IMR-90 (cell line): ENCODE measurements at regions of chr18 and their contacts with region 1.

Region 1: GRCh38 chr18:13392029-13392750 is 173.6 kb downstream of the LDLRAD4 start:
- DNase-seq: no peak
- ATAC-seq: no peak
- H3K4me3 ChIP-seq: no peak overlapping the region
- H3K27ac ChIP-seq: no peak overlapping the region
- H3K4me1 ChIP-seq: 0 out of 2 replicates have a peak, but pooled peaks cover 2% of the 10 kb centered on the region
- H3K27me3 ChIP-seq: peaks cover 8% of the 10 kb centered on the region
- CTCF ChIP-seq: no peak
- POLR2A ChIP-seq: no peak
- RAD21 ChIP-seq: no peak

Region 2: DNA sequence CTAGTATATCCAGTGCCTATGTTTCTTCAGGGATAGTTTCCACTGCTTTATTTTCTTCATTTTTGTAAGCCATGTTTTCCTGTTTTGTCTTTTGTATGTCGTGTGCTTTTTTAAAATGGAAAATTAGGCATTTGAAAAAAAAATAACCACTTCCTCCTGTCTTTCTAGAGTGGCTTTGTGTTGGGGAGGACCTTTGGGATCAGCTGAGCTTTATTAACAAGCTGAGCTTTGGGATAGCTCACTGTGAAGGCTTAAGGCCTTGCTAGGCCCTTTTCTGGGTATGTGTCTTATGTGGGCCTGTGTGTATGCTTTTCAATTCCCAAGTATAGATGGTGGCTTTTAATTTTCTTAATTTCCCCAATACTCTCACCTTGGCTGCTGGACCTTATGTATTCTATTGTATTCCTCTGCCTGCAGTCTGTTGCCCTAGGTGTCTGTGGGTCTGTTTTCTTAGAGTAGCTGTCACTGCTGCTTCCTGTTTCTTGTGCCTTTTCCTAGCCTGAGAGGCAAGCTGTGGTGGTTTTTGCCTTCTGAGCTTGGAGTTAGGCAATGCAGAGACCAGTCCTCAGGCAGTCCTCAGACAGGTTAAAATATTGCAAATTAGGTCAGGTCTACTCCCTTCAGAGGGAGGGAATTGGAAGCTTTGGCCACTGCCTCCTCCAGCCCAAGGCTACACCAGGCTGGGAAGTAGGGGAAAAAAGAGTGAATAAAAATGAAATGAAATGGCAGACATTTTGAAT is 38.9 kb before region 1 on chr18:
- CTCF ChIA-PET with region 1: no interaction called
- POLR2A ChIA-PET with region 1: no interaction called
- dilution Hi-C with region 1: no loop called
- in situ Hi-C with region 1: no loop called
- intact Hi-C with region 1: no loop called
- DNase-seq: no peak
- ATAC-seq: no peak
- H3K4me3 ChIP-seq: no peak overlapping the region
- H3K27ac ChIP-seq: no peak overlapping the region
- H3K4me1 ChIP-seq: no peaks in the 10 kb centered on the region
- H3K27me3 ChIP-seq: no peaks in the 10 kb centered on the region
- CTCF ChIP-seq: no peak
- POLR2A ChIP-seq: no peak
- RAD21 ChIP-seq: no peak

Region 3: GRCh38 chr18:13407484-13407883 is 15.3 kb after region 1 on chr18:
- CTCF ChIA-PET with region 1: no interaction called
- POLR2A ChIA-PET with region 1: interaction called, 22 read pairs
- dilution Hi-C with region 1: no loop called
- in situ Hi-C with region 1: no loop called
- intact Hi-C with region 1: no loop called
- DNase-seq: no peak
- ATAC-seq: no peak
- H3K4me3 ChIP-seq: no peak overlapping the region
- H3K27ac ChIP-seq: no peak overlapping the region
- H3K4me1 ChIP-seq: no peaks in the 10 kb centered on the region
- H3K27me3 ChIP-seq: no peaks in the 10 kb centered on the region
- CTCF ChIP-seq: no peak
- POLR2A ChIP-seq: no peak
- RAD21 ChIP-seq: no peak